Gastrocnemius medialis (tissue), 4 donors: ENCODE measurements at regions of chr12 and their contacts with region 1.

Region 1: GRCh38 chr12:13211859-13212664 is 15.5 kb downstream of the EMP1 start:
- DNase-seq: no peak
- ATAC-seq: peak; percentile 23 to 55
- H3K4me3 ChIP-seq: no peak overlapping the region
- H3K27ac ChIP-seq: no peak overlapping the region
- H3K4me1 ChIP-seq: peaks cover 22 to 27% of the 10 kb centered on the region in 2 donors
- H3K27me3 ChIP-seq: no peaks in the 10 kb centered on the region
- CTCF ChIP-seq: peak; percentile 51 to 77 (median 55)
- POLR2A ChIP-seq: no peak

Region 2: GRCh38 chr12:12909228-12909994 is 302.7 kb before region 1 on chr12:
- in situ Hi-C with region 1: loop called in 3 of 4 experiments (anchors 5 to 10 kb)
- intact Hi-C with region 1: no loop called
- DNase-seq: no peak
- ATAC-seq: no peak
- H3K4me3 ChIP-seq: no peak overlapping the region
- H3K27ac ChIP-seq: no peak overlapping the region
- H3K4me1 ChIP-seq: no peaks in the 10 kb centered on the region
- H3K27me3 ChIP-seq: no peaks in the 10 kb centered on the region
- CTCF ChIP-seq: no peak
- POLR2A ChIP-seq: no peak

Region 3: DNA sequence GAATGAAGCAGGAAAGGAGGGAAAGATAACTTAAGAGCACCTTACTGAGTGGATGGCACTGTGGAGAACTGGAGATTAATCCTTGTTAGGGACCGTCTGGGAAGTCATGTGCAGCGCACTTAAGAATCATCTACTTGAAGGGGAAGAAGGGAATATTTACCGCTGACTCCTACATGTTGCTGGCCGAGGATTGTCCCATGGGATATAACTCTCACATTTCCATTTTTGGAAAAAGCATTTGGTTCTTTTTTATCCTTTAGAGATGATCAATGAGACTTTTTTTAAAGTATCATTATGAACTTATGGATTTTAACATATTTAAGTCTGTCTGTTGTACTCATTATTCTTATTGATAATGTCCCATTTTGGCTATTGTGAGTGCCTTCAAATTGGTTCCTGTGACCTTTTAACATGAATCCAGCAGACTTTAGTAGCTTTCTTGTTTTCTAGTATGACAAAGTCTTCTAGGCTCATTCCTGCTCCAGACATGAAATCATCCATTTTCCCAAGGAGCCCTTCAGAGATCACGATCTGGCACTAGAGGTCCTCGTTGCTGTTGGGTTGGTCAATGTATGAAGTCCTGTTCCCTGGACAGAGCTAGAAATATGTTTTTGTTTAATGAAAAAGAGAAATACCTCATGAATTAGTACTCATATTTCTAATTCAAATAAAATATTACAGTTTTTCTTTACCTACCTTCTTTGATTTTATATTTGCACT is 188.1 kb before region 1 on chr12:
- in situ Hi-C with region 1: no loop called
- intact Hi-C with region 1: loop called (anchors 10 kb)
- DNase-seq: no peak
- ATAC-seq: peak in 1 of 2 donors; percentile 80
- H3K4me3 ChIP-seq: no peak overlapping the region
- H3K27ac ChIP-seq: no peak overlapping the region
- H3K4me1 ChIP-seq: peaks cover 0 to 4% of the 10 kb centered on the region in 2 donors
- H3K27me3 ChIP-seq: no peaks in the 10 kb centered on the region
- CTCF ChIP-seq: peak in 1 of 5 experiments; percentile 40
- POLR2A ChIP-seq: no peak

Region 4: DNA sequence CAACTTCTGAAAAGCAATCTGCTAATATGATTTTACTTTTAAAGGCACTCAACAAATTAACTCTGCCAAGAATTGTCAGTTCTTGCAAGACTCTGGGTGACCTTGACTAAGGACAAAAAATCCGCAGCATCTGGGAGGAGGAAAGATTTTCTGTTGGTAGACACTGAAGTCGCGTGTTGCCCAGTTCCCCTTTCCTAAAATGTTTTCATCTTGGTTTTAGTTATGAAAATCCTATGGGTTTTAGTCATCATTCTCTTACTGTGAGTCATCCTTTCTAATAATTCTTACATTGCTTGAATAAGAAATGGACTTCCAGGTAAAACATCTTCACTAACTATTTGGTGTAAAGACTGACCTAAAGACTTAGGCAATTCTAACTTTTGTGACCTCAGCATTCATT is 117.7 kb before region 1 on chr12:
- in situ Hi-C with region 1: loop called in 3 of 4 experiments (anchors 5 to 25 kb)
- intact Hi-C with region 1: loop called (anchors 1 kb)
- DNase-seq: no peak
- ATAC-seq: no peak
- H3K4me3 ChIP-seq: no peak overlapping the region
- H3K27ac ChIP-seq: no peak overlapping the region
- H3K4me1 ChIP-seq: peaks cover 6 to 10% of the 10 kb centered on the region in 2 donors
- H3K27me3 ChIP-seq: no peaks in the 10 kb centered on the region
- CTCF ChIP-seq: no peak
- POLR2A ChIP-seq: no peak

Region 5: GRCh38 chr12:13100882-13101769 is 110.9 kb before region 1 on chr12:
- in situ Hi-C with region 1: loop called in 3 of 4 experiments (anchors 5 to 25 kb)
- intact Hi-C with region 1: loop called (anchors 1 kb)
- DNase-seq: peak; percentile 71 to 79
- ATAC-seq: peak; percentile 60 to 62
- H3K4me3 ChIP-seq: peak overlapping the region; percentile 58 to 75 (median 65)
- H3K27ac ChIP-seq: peak overlapping the region; percentile 83 to 84 (median 83)
- H3K4me1 ChIP-seq: peaks cover 19 to 32% of the 10 kb centered on the region in 2 donors
- H3K27me3 ChIP-seq: no peaks in the 10 kb centered on the region
- CTCF ChIP-seq: no peak
- POLR2A ChIP-seq: peak in 1 of 2 donors; percentile 28